ENCODE measurements at regions of chr9 and their contacts with region 1.

Region 1: GRCh38 chr9:131530920-131531832 is at the start of gene UCK1:
- DNase-seq: peak; percentile 73
- ATAC-seq: peak; percentile 88
- H3K4me3 Mint-ChIP-seq: peak within 1 kb of the TSS; percentile 79
- H3K27ac Mint-ChIP-seq: no peak within 1 kb of the TSS
- H3K4me1 Mint-ChIP-seq: peaks cover 22% of the 10 kb centered on the region
- H3K27me3 Mint-ChIP-seq: no peaks in the 10 kb centered on the region
- CTCF ChIP-seq: no peak
- total RNA-seq, gene UCK1: 19.1 and 30.4 TPM in 2 replicates

Region 2: GRCh38 chr9:130498298-130498917 is 1032.8 kb before region 1 on chr9:
- CTCF ChIA-PET with region 1: no interaction called
- POLR2A ChIA-PET with region 1: no interaction called
- intact Hi-C with region 1: no loop called
- DNase-seq: no peak
- ATAC-seq: no peak
- H3K4me3 Mint-ChIP-seq: no peak overlapping the region
- H3K27ac Mint-ChIP-seq: no peak overlapping the region
- H3K4me1 Mint-ChIP-seq: no peaks in the 10 kb centered on the region
- H3K27me3 Mint-ChIP-seq: peaks cover 8% of the 10 kb centered on the region
- CTCF ChIP-seq: no peak

Region 3: DNA sequence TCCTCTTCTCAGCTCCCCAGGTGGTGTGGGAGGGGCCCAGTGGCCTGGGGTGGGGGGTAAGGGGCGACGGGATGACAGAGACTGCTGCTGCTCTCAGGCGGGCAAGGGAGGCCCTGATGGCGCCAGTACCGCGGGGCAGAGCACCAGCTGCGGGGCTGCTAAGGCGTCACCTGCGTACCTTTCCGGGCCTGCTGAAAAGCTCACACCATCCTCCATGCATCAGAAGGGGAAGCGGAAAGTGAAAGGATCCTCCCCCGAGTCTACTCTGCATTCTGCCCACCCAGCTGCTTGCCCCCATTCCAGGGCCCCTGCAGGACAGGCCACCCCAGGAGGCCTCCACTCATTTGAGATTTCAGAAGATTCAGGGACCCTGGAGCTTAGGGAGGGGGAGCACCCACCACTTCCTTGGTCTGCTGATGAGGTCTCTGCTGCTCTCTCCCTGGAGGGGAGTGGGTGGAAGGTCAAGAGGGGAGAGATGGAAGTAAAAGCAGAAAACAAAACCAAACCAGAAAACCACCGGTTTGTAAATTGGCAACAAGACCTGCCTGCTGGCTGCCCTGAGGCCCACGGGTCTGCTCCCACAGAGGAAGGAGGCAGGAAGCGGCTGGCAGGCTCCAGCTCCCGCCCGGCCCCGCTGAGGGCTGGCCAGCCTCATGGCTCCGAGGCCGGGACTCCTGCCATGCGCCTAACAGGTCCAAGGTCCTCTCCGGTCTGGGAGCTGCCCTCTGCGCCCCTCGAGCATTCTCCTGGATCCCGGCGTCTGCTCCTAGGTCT is 47.7 kb after region 1 on chr9:
- CTCF ChIA-PET with region 1: no interaction called
- POLR2A ChIA-PET with region 1: no interaction called
- intact Hi-C with region 1: loop called (anchors 5 kb)
- DNase-seq: no peak
- ATAC-seq: peak; percentile 86
- H3K4me3 Mint-ChIP-seq: peak overlapping the region; percentile 53
- H3K27ac Mint-ChIP-seq: peak overlapping the region; percentile 91
- H3K4me1 Mint-ChIP-seq: peaks cover 27% of the 10 kb centered on the region
- H3K27me3 Mint-ChIP-seq: no peaks in the 10 kb centered on the region
- CTCF ChIP-seq: no peak

Region 4: DNA sequence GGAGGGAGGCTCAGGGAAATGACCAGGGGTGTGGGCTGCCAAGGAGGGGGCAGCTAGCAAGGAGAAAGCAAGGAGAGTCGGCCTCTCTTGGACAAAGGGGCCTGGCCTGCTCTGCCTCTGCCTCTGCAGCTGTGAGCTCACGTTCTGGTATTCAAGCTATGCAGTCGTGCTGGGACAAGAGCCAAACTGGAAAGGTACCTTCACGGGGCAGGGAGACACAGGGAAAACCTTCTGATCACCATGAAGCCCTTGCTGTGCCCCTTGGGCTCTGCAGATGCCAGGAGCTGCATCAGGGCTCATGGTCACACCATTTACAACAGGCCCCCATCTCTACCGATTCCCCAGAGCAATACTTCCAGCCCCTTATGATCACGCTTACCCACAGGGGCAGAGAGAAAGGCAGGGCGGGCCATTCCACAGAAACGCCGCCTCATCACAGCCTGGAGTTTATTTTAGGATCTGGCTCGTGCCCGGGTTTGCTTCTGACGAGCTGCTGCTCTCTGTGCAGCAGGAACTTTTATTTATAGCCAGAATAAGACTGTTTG is 77.4 kb after region 1 on chr9:
- CTCF ChIA-PET with region 1: no interaction called
- POLR2A ChIA-PET with region 1: no interaction called
- intact Hi-C with region 1: no loop called
- DNase-seq: no peak
- ATAC-seq: no peak
- H3K4me3 Mint-ChIP-seq: no peak overlapping the region
- H3K27ac Mint-ChIP-seq: no peak overlapping the region
- H3K4me1 Mint-ChIP-seq: peaks cover 7% of the 10 kb centered on the region
- H3K27me3 Mint-ChIP-seq: no peaks in the 10 kb centered on the region
- CTCF ChIP-seq: no peak

Region 5: DNA sequence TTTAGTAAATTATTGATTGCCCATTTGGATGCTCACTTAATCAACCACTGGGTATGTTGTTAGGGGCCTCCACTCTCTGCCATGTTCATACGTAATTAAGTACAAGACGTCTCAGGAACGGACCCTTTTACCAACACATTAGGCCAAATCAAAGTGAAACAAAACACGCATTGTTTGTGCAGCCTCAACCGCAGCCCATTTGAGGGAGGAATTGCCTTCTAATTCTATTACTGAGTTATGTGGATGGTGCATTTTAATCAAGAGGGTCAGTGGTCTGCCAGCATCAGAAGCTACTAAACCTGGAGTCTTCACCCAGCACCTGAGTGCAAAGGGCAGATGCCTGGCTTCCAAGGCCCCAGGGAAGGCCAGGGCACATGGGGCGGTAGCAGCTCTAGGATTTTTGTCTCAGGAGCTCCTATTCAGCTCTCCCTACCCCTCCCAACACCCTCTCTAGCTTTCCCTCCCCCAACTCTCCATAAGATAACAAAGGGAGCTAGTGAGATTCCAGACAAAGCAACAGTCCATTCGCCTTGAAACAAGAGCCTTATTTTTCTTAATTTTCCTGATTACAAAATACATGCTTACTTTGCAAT is 556.4 kb after region 1 on chr9:
- CTCF ChIA-PET with region 1: no interaction called
- POLR2A ChIA-PET with region 1: no interaction called
- intact Hi-C with region 1: no loop called
- DNase-seq: no peak
- ATAC-seq: no peak
- H3K4me3 Mint-ChIP-seq: no peak overlapping the region
- H3K27ac Mint-ChIP-seq: no peak overlapping the region
- H3K4me1 Mint-ChIP-seq: no peaks in the 10 kb centered on the region
- H3K27me3 Mint-ChIP-seq: peaks cover 17% of the 10 kb centered on the region
- CTCF ChIP-seq: no peak